Transverse colon (tissue), 4 donors: ENCODE measurements at regions of chr6 and their contacts with region 1.

Region 1: GRCh38 chr6:42984001-42984923 is at the start of gene PPP2R5D:
- DNase-seq: peak; percentile 98
- H3K4me3 ChIP-seq: peak within 1 kb of the TSS; percentile 89 to 97 (median 94)
- H3K27ac ChIP-seq: peak within 1 kb of the TSS; percentile 89 to 96 (median 94)
- H3K4me1 ChIP-seq: peaks cover 28 to 49% (median 42%) of the 10 kb centered on the region in 4 donors
- H3K27me3 ChIP-seq: no peaks in the 10 kb centered on the region
- CTCF ChIP-seq: peak in 2 of 5 experiments; percentile 27 to 29
- EP300 ChIP-seq: no peak
- POLR2A ChIP-seq: peak; percentile 84
- total RNA-seq, gene PPP2R5D: 38.0 to 87.5 (median 52.9) TPM

Region 2: DNA sequence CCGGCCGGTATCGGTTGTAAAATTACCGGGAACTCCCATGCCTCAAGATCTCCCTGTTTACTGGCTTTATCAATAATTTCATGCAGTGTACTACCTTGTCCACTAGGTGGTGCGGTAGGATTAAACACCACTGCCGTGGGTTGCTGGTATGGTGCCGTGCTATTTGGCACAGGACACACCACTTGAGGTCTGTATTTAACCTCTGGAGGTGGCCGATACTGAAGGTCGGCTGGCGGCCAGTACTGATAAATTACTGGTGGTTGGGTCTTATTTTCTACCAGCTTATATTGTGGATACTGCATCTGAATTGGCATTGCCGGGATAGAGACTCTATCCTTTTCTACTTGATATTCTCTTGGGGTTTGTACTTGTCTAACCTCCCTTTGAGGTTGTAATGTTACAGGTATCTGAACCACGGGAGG is 82.7 kb before region 1 on chr6:
- in situ Hi-C with region 1: no loop called
- intact Hi-C with region 1: no loop called
- DNase-seq: peak; percentile 76
- H3K4me3 ChIP-seq: no peak overlapping the region
- H3K27ac ChIP-seq: no peak overlapping the region
- H3K4me1 ChIP-seq: peaks cover 0 to 13% (median 4%) of the 10 kb centered on the region in 4 donors
- H3K27me3 ChIP-seq: no peaks in the 10 kb centered on the region
- CTCF ChIP-seq: peak; percentile 87 to 95 (median 90)
- EP300 ChIP-seq: no peak
- POLR2A ChIP-seq: no peak

Region 3: GRCh38 chr6:42928986-42929820 is 55.1 kb before region 1 on chr6 and contains the start of gene CNPY3:
- in situ Hi-C with region 1: no loop called
- intact Hi-C with region 1: loop called (anchors 1 kb)
- DNase-seq: peak; percentile 96
- H3K4me3 ChIP-seq: peak within 1 kb of the TSS; percentile 53 to 69 (median 63)
- H3K27ac ChIP-seq: peak within 1 kb of the TSS; percentile 90 to 94 (median 90)
- H3K4me1 ChIP-seq: peaks cover 16 to 45% (median 22%) of the 10 kb centered on the region in 4 donors
- H3K27me3 ChIP-seq: peaks cover 3% of the 10 kb centered on the region
- CTCF ChIP-seq: peak in 1 of 5 experiments; percentile 17
- EP300 ChIP-seq: no peak
- POLR2A ChIP-seq: peak; percentile 86
- total RNA-seq, gene CNPY3: 10.3 to 24.4 (median 21.0) TPM

Region 4: GRCh38 chr6:43138267-43138666 is 154.0 kb after region 1 on chr6:
- in situ Hi-C with region 1: no loop called
- intact Hi-C with region 1: no loop called
- DNase-seq: no peak
- H3K4me3 ChIP-seq: no peak overlapping the region
- H3K27ac ChIP-seq: no peak overlapping the region
- H3K4me1 ChIP-seq: peaks cover 0 to 4% (median 3%) of the 10 kb centered on the region in 4 donors
- H3K27me3 ChIP-seq: no peaks in the 10 kb centered on the region
- CTCF ChIP-seq: no peak
- EP300 ChIP-seq: no peak
- POLR2A ChIP-seq: no peak

Region 5: DNA sequence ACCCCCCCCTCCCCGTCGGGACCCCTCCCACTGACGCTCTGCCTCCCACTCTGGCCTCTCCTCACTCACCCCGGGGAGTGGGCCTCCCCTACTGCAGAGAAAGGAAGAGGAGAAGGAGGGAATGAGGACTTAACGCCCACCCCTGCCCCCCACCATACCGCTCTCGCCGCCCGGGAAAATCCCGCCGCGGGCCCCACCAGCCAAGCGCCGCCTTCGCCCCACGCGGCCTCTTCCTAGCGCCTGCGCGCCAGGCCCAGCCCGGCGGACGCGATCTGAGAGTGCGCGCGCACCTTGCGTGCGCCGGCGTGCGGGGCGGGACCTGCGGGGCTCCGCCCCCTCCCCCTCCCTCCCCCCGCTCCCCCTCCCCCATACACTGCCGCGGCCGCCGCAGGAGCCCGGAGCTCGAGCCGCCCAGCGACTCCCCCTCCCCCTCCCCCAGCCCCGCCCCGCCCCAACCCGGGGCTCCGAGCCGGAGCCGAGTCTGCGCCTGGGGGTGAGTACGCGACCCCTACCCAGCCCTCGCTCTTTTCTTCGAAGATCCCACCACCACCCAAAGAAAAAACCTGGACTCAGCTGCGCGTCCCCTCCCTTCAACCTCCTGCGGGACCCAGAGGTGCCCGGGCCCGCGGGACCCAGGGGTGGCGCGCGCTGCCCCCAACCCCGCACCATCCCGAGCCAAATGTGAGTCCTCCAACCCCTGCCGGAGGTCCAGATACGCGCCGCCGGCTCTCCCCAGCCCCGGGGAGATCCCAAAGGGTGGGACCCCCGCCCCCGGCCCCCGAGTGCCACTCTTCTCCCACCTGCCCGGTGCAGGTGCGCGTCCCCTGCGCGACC is 1143.1 kb after region 1 on chr6 and contains the starts of genes MRPL14 and TMEM63B:
- in situ Hi-C with region 1: no loop called
- intact Hi-C with region 1: no loop called
- DNase-seq: peak; percentile 91
- H3K4me3 ChIP-seq: peak within 1 kb of the TSS; percentile 86 to 98 (median 94)
- H3K27ac ChIP-seq: peak within 1 kb of the TSS; percentile 92 to 98 (median 95)
- H3K4me1 ChIP-seq: peaks cover 28 to 63% (median 58%) of the 10 kb centered on the region in 4 donors
- H3K27me3 ChIP-seq: no peaks in the 10 kb centered on the region
- CTCF ChIP-seq: no peak
- EP300 ChIP-seq: no peak
- POLR2A ChIP-seq: peak; percentile 74
- total RNA-seq, gene MRPL14: 15.5 to 54.6 (median 45.9) TPM
- total RNA-seq, gene TMEM63B: 35.0 to 258 (median 89.4) TPM